Naive thymus-derived CD4-positive, alpha-beta T cell (primary cell): ENCODE measurements at regions of chr3 and their contacts with region 1.

Region 1: DNA sequence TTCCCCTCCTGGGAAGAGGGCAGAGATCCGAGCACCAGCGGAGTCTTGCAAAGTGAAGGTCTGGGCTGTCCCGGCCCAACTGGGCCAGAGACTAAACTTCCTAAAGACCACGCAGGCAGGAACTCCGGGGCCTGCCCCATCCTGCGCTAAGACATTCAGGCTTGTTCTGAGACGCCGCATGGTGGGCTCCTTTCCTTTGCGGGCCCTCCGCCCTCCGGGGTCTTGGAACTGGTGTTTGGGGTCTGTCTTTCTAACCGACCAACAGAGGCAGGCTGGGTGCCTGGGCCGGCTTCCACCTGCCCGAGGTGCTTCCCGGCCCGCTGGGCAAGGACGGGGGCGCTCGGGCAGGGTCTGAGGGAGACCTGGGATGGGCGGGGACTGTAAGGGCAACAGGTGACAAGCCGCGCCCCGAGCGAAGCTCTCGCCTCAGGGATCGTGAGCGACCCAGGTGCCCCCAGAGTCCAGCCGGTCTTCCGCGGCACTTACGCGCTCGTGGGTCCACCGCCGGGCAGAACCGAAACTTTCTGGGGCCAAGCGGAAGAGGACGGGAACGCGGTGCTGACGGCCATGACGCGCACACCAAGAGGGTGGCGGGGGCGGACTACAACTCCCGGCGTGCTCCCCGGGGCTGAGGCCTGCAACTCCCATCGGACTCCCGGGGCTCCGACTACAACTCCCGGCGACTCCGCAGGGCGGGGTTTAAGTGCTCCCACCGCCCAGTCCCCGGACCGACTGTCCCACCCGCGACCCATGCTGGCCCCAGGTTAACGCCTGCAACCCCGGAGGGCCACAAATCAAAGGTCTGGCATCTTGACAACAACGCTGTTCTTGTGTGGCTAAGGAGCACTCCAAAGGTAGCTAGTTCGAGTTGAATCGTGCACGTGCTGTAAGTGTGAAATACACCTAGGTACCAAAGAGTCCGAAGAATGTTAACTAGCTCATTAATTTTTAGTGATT is at the start of gene FYCO1:
- DNase-seq: peak; percentile 75 to 87 (median 86)
- ATAC-seq: peak; percentile 96
- H3K4me3 ChIP-seq: peak within 1 kb of the TSS; percentile 85
- H3K4me3 Mint-ChIP-seq: peak within 1 kb of the TSS; percentile 83 to 93 (median 90)
- H3K27ac ChIP-seq: peak within 1 kb of the TSS; percentile 84
- H3K27ac Mint-ChIP-seq: peak within 1 kb of the TSS; percentile 78 to 96 (median 92)
- H3K4me1 ChIP-seq: peaks cover 22 to 48% of the 10 kb centered on the region in 2 donors
- H3K4me1 Mint-ChIP-seq: peaks cover 10 to 49% (median 37%) of the 10 kb centered on the region in 7 donors
- H3K27me3 ChIP-seq: no peaks in the 10 kb centered on the region
- H3K27me3 Mint-ChIP-seq: peaks cover 3 to 11% (median 8%) of the 10 kb centered on the region in 5 donors
- total RNA-seq, gene FYCO1: 20.0 to 27.5 (median 22.9) TPM

Region 2: DNA sequence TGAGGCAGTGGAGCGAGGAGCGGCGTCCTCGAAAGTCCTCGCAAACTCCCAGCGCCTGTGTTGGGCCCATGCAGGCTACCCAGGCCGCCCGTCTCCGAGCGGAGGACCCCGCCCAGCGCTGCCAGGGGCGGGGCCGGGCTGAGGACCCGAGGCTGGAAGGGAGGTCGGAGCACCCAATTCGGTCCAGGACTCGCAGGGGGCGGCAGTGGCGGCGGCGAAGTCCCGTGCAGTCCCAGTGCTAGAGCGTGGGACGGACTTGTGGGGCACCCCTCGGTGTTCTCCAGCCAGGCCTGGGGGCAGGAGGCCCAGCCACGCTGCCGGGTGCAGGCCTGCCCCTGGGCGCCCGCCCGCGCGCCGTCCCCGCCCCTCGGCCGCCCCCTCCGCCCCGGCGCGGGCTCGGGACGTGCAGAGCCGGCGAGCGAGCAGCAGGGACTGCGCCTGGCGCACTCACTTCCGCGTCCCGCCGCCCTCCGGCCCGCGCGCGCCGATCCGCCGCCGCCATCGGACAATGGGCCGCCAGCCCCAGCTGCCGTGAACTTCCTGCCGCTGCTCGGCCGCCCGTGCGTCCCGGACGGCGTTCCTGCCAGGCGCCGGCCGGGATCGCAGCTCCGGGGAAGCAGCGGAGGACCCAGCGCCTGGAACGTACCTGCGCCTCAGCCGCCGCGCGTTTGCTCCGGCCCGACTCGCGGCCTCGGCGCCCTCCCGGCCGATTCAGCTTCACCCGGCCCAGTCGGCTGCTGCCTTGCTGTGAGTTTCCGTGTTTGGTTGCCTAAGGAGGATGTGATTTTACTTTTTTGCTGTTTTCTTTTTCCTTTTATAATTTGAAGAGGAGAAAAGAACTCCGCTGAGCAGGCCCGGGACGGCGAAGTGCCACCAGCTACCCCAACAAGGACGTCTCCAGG is 401.6 kb before region 1 on chr3:
- CTCF ChIA-PET with region 1: no interaction called
- POLR2A ChIA-PET with region 1: no interaction called
- intact Hi-C with region 1: loop called in 1 of 2 experiments (anchors 10 kb)
- DNase-seq: peak; percentile 46 to 83 (median 70)
- ATAC-seq: peak; percentile 83
- H3K4me3 ChIP-seq: peak overlapping the region; percentile 71
- H3K4me3 Mint-ChIP-seq: peak overlapping the region; percentile 84 to 99 (median 90)
- H3K27ac ChIP-seq: peak overlapping the region; percentile 72
- H3K27ac Mint-ChIP-seq: peak overlapping the region; percentile 85 to 96 (median 91)
- H3K4me1 ChIP-seq: peaks cover 44 to 58% of the 10 kb centered on the region in 2 donors
- H3K4me1 Mint-ChIP-seq: peaks cover 48 to 61% (median 55%) of the 10 kb centered on the region in 7 donors
- H3K27me3 ChIP-seq: no peaks in the 10 kb centered on the region
- H3K27me3 Mint-ChIP-seq: peaks cover 0 to 3% (median 0%) of the 10 kb centered on the region in 5 donors

Region 3: GRCh38 chr3:45938864-45939263 is 56.6 kb before region 1 on chr3:
- CTCF ChIA-PET with region 1: interaction called, 3 read pairs
- POLR2A ChIA-PET with region 1: interaction called, 6 read pairs
- intact Hi-C with region 1: loop called (anchors 1 kb)
- DNase-seq: peak; percentile 58 to 84 (median 79)
- ATAC-seq: peak; percentile 92
- H3K4me3 ChIP-seq: no peak overlapping the region
- H3K4me3 Mint-ChIP-seq: no peak overlapping the region
- H3K27ac ChIP-seq: no peak overlapping the region
- H3K27ac Mint-ChIP-seq: peak overlapping the region in 1 of 9 donors; percentile 3
- H3K4me1 ChIP-seq: peaks cover 15 to 32% of the 10 kb centered on the region in 2 donors
- H3K4me1 Mint-ChIP-seq: peaks cover 21 to 44% (median 30%) of the 10 kb centered on the region in 7 donors
- H3K27me3 ChIP-seq: no peaks in the 10 kb centered on the region
- H3K27me3 Mint-ChIP-seq: no peaks in the 10 kb centered on the region

Region 4: DNA sequence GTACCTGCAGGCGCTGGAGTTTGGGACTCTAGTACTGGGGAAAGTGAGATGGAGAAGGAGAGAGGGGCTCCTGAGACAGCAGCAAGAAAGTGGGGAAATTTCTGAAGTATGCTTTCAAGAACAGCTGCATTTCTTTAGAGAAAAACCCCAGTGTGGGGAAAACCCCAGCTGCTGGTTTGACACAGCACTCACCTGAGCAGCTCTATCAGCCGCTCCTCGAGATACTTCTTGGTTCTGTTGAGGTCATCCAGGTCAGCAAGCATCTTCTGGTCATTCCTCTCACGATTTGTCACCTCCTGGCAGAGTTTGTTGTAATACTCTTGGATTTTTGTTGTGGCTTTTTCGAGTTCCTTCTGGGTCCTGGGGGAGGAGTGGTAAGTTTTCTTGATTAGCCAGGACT is 33.5 kb before region 1 on chr3:
- CTCF ChIA-PET with region 1: no interaction called
- POLR2A ChIA-PET with region 1: interaction called, 5 read pairs
- intact Hi-C with region 1: loop called in 1 of 2 experiments (anchors 1 kb)
- DNase-seq: no peak
- ATAC-seq: no peak
- H3K4me3 ChIP-seq: no peak overlapping the region
- H3K4me3 Mint-ChIP-seq: peak overlapping the region in 1 of 10 donors; percentile 31
- H3K27ac ChIP-seq: no peak overlapping the region
- H3K27ac Mint-ChIP-seq: peak overlapping the region in 1 of 9 donors; percentile 64
- H3K4me1 ChIP-seq: peaks cover 9 to 82% of the 10 kb centered on the region in 2 donors
- H3K4me1 Mint-ChIP-seq: peaks cover 6 to 75% (median 18%) of the 10 kb centered on the region in 7 donors
- H3K27me3 ChIP-seq: no peaks in the 10 kb centered on the region
- H3K27me3 Mint-ChIP-seq: no peaks in the 10 kb centered on the region

Region 5: DNA sequence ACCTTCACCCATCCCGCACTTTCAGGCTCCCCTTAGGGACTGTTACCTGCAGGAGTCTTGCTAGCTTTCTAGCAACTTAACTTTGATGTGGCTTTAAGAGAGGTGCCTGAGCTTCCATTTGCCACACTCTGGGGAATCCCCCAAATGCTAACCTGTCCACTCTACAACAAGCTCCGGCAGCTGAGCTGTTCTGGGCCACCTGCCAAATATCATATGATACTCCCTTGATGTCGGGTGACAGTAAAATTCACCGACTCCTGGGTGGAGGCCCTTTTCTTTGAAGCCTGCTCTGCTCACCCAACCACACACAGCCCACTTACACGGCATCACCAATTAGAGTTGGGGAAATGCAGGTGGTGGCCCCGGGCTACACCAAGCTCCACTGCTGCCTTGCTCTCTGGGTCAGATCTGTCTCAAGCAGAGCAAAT is 69.8 kb after region 1 on chr3:
- CTCF ChIA-PET with region 1: no interaction called
- POLR2A ChIA-PET with region 1: interaction called, 3 read pairs
- intact Hi-C with region 1: loop called (anchors 1 kb)
- DNase-seq: peak; percentile 25 to 94 (median 80)
- ATAC-seq: peak; percentile 94
- H3K4me3 ChIP-seq: no peak overlapping the region
- H3K4me3 Mint-ChIP-seq: peak overlapping the region; percentile 62 to 88 (median 75)
- H3K27ac ChIP-seq: peak overlapping the region; percentile 56
- H3K27ac Mint-ChIP-seq: peak overlapping the region; percentile 33 to 90 (median 81)
- H3K4me1 ChIP-seq: peaks cover 51 to 62% of the 10 kb centered on the region in 2 donors
- H3K4me1 Mint-ChIP-seq: peaks cover 48 to 82% (median 72%) of the 10 kb centered on the region in 7 donors
- H3K27me3 ChIP-seq: no peaks in the 10 kb centered on the region
- H3K27me3 Mint-ChIP-seq: peaks cover 0 to 68% (median 0%) of the 10 kb centered on the region in 5 donors

Region 6: GRCh38 chr3:46496741-46497554 is 501.4 kb after region 1 on chr3:
- CTCF ChIA-PET with region 1: no interaction called
- POLR2A ChIA-PET with region 1: no interaction called
- intact Hi-C with region 1: no loop called
- DNase-seq: peak in 7 of 9 donors; percentile 15 to 46 (median 31)
- ATAC-seq: peak; percentile 44
- H3K4me3 ChIP-seq: no peak overlapping the region
- H3K4me3 Mint-ChIP-seq: no peak overlapping the region
- H3K27ac ChIP-seq: no peak overlapping the region
- H3K27ac Mint-ChIP-seq: peak overlapping the region in 2 of 9 donors; percentile 24 to 83
- H3K4me1 ChIP-seq: peaks cover 5% of the 10 kb centered on the region in 2 donors
- H3K4me1 Mint-ChIP-seq: peaks cover 5 to 20% (median 9%) of the 10 kb centered on the region in 7 donors
- H3K27me3 ChIP-seq: no peaks in the 10 kb centered on the region
- H3K27me3 Mint-ChIP-seq: peaks cover 0 to 9% (median 0%) of the 10 kb centered on the region in 5 donors